ENCODE measurements at regions of chr4 and their contacts with region 1.

Region 1: DNA sequence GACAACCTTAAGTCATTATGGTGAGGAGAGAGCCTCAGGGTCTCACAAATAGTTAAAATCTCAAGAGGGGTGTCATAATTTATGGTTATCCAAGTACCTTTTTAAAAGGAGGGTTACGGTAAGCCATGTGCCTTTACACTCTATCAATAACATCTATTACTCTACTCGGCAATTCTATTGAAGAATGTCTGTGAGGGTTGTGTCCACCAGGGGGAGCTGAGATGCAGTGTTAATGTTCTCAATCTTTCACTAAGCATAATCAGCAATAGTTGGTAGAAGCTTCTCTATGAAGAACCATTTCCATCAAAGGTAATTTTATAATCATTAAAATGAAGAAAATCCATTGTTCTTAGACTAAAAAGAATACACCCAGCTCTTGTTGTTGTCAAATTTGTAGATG is 457.4 kb downstream of the CENPC start:
- DNase-seq: peak; percentile 61
- ATAC-seq: no peak
- H3K4me3 Mint-ChIP-seq: no peak overlapping the region
- H3K27ac Mint-ChIP-seq: no peak overlapping the region
- H3K4me1 Mint-ChIP-seq: no peaks in the 10 kb centered on the region
- H3K27me3 Mint-ChIP-seq: no peaks in the 10 kb centered on the region

Region 2: GRCh38 chr4:67327262-67328017 is 239.5 kb after region 1 on chr4:
- CTCF ChIA-PET with region 1: interaction called, 18 read pairs
- POLR2A ChIA-PET with region 1: no interaction called
- DNase-seq: peak; percentile 71
- ATAC-seq: peak; percentile 72
- H3K4me3 Mint-ChIP-seq: no peak overlapping the region
- H3K27ac Mint-ChIP-seq: no peak overlapping the region
- H3K4me1 Mint-ChIP-seq: no peaks in the 10 kb centered on the region
- H3K27me3 Mint-ChIP-seq: peaks cover 3% of the 10 kb centered on the region

Region 3: GRCh38 chr4:67344594-67345380 is 256.9 kb after region 1 on chr4:
- CTCF ChIA-PET with region 1: no interaction called
- POLR2A ChIA-PET with region 1: no interaction called
- DNase-seq: no peak
- ATAC-seq: no peak
- H3K4me3 Mint-ChIP-seq: no peak overlapping the region
- H3K27ac Mint-ChIP-seq: no peak overlapping the region
- H3K4me1 Mint-ChIP-seq: no peaks in the 10 kb centered on the region
- H3K27me3 Mint-ChIP-seq: peaks cover 5% of the 10 kb centered on the region